ENCODE measurements at regions of chr18 and their contacts with region 1.

Region 1: DNA sequence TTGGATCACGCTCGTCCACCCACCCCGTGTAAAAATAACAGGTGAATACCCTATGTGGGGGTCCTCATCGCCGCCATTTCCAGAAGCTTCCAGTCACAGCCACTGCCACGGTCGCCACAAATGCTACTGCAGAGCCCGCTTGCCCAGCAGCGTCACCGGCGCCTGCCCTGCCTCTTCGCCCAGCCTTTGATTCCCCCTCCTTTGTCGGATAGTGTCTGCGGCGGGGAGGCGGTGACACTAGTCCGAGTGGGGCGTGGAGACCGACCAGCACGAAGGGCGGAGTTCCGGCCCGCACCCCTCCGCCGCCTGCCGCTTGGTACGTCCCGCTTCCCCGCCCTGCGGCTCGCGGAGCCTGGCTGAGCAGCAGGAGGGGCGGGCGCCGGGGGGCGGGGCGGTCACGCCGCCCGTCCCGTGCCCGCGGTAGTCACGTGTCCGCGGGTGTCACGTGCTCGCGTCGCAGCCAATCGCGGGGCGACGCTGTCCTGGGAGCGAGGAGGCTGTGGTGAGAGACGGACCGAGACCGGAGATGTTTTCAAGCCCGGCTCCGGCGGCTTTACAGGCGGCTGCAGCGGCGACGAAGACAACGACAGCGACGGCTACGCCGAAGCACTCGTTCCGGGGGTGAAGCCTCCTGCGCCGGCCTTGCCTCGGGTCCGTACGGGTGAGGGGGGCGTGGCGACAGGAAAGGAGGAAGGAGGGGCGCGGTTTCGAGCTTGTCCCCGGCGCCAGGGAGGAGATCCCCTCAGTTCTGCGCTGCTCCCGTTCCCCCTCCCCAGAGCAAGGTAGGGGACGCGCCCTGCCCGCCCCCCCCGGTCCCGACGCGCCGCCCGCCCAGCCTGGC is at the start of gene ANKRD12:
- DNase-seq: peak; percentile 98 to 99 (median 99)
- H3K4me3 ChIP-seq: peak within 1 kb of the TSS; percentile 83 to 98 (median 93)
- H3K27ac ChIP-seq: peak within 1 kb of the TSS; percentile 90 to 96
- H3K4me1 ChIP-seq: peaks cover 28 to 49% (median 39%) of the 10 kb centered on the region in 4 experiments
- H3K27me3 ChIP-seq: no peaks in the 10 kb centered on the region

Region 2: DNA sequence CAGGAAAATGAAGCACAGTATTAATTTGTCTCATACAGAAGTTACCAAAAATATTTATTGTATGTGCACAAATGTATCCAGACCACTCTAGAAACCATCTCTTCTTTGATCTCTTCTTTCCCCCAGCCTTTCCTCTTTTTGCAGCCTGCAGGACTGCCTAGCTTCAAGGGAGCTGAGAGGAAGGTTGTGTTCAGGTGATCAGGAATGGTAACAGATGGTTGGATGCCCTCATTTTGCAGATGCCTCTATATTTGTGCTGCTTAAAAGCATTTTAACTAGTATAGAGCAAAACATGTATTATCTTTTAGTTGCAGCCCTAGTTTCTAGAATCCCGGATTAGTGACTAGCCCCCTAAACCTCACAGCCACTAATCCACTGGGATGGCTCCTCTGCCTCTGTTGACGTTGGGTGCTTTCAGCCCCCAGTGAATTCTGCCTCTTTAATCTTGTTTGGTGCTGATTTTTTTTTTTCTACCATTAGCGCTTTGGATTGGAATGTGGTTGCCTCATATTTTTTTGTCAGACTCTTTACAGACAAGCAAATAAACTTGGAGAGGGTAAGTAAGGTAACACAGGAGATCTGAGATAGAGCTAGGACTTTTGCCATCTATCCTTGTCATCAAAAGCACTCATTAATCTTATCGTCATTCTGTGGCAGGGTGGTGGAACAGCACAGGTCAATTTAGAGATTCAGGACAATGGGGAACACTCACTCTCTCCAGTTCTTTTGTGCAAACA is 137.9 kb before region 1 on chr18:
- CTCF ChIA-PET with region 1: no interaction called
- POLR2A ChIA-PET with region 1: no interaction called
- DNase-seq: no peak
- H3K4me3 ChIP-seq: no peak overlapping the region
- H3K27ac ChIP-seq: peak overlapping the region in 1 of 2 experiments; percentile 36
- H3K4me1 ChIP-seq: no peaks in the 10 kb centered on the region
- H3K27me3 ChIP-seq: peaks cover 0 to 3% (median 0%) of the 10 kb centered on the region in 5 experiments

Region 3: DNA sequence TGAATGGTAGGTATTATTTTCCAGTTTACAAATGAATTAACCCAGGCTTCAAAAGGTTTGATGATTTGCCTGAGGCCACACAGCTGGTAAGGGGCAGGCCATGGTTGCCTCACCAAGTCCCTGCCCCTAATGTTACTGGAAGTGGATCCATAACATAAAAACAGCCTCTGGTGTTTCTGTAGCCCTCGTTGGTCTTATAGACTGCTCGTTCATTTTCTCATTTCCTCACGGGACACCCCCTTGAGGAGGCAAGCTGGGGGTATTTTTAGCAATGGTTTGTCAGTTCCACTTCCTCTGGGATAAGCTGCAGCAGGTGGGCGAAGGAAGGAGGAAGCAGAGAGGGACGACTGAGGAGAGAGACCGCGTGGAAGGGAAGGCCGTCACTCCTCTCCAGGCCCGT is 66.9 kb before region 1 on chr18:
- CTCF ChIA-PET with region 1: interaction called, 13 read pairs
- POLR2A ChIA-PET with region 1: interaction called, 3 read pairs
- DNase-seq: no peak
- H3K4me3 ChIP-seq: peak overlapping the region in 3 of 7 experiments; percentile 8 to 54 (median 36)
- H3K27ac ChIP-seq: peak overlapping the region in 1 of 2 experiments; percentile 39
- H3K4me1 ChIP-seq: peaks cover 9 to 31% (median 15%) of the 10 kb centered on the region in 4 experiments
- H3K27me3 ChIP-seq: no peaks in the 10 kb centered on the region

Region 4: GRCh38 chr18:9102508-9103375 is 33.8 kb before region 1 on chr18 and contains the start of gene NDUFV2:
- CTCF ChIA-PET with region 1: interaction called, 5 read pairs
- POLR2A ChIA-PET with region 1: interaction called, 23 read pairs
- DNase-seq: peak; percentile 96 to 98 (median 98)
- H3K4me3 ChIP-seq: peak within 1 kb of the TSS; percentile 80 to 97 (median 89)
- H3K27ac ChIP-seq: peak within 1 kb of the TSS; percentile 91 to 97
- H3K4me1 ChIP-seq: peaks cover 36 to 61% (median 54%) of the 10 kb centered on the region in 4 experiments
- H3K27me3 ChIP-seq: no peaks in the 10 kb centered on the region

Region 5: GRCh38 chr18:9117980-9118841 is 18.3 kb before region 1 on chr18:
- CTCF ChIA-PET with region 1: interaction called, 14 read pairs
- POLR2A ChIA-PET with region 1: interaction called, 5 read pairs
- DNase-seq: peak; percentile 67 to 92 (median 82)
- H3K4me3 ChIP-seq: peak overlapping the region in 3 of 7 experiments; percentile 44 to 63 (median 57)
- H3K27ac ChIP-seq: peak overlapping the region; percentile 37 to 80
- H3K4me1 ChIP-seq: peaks cover 29 to 65% (median 33%) of the 10 kb centered on the region in 4 experiments
- H3K27me3 ChIP-seq: no peaks in the 10 kb centered on the region

Region 6: DNA sequence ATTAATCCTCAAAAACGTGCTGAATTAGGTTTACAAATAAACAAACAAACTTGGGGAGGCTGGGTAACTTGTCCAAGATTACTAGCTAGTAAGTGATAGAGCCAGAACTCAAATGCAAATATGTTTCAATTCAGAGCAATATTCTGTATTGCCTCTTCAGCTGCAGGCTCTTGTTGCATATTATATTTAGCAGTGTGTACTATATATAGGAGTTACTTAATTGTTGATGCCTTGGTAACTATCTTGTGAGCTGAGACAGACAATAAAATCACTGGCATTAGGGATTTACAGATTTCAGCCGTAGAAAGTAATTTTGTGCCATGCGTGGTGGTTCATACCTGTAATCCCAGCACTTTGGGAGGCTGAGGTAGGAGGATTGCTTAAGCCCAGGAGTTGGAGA is 10.2 kb before region 1 on chr18:
- CTCF ChIA-PET with region 1: interaction called, 13 read pairs
- POLR2A ChIA-PET with region 1: interaction called, 5 read pairs
- DNase-seq: no peak
- H3K4me3 ChIP-seq: no peak overlapping the region
- H3K27ac ChIP-seq: peak overlapping the region in 1 of 2 experiments; percentile 15
- H3K4me1 ChIP-seq: no peaks in the 10 kb centered on the region
- H3K27me3 ChIP-seq: no peaks in the 10 kb centered on the region

Region 7: GRCh38 chr18:9147440-9148202 is 11.1 kb after region 1 on chr18:
- CTCF ChIA-PET with region 1: interaction called, 14 read pairs
- POLR2A ChIA-PET with region 1: interaction called, 3 read pairs
- DNase-seq: peak; percentile 71 to 76 (median 75)
- H3K4me3 ChIP-seq: peak overlapping the region in 3 of 7 experiments; percentile 31 to 42 (median 36)
- H3K27ac ChIP-seq: peak overlapping the region; percentile 7 to 68
- H3K4me1 ChIP-seq: peaks cover 20 to 76% (median 46%) of the 10 kb centered on the region in 4 experiments
- H3K27me3 ChIP-seq: no peaks in the 10 kb centered on the region

Region 8: DNA sequence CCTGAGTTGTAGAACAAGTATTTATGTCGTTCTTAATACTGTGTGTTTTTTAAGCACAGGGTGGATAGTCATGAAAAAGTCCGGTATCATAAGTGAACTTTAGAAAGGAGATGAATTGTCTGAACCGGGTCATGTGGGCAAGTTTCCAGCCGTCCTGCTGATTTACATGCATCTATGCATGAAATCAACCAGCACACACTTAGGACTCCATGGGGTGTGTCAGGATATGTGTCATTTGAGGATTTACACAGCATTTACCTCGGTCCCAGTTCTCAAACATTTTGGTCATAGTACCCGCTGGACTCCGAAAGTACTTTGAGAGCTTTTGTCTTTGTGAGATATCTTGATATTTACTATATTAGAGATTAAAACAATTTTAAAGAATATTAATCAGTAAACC is 150.5 kb after region 1 on chr18:
- CTCF ChIA-PET with region 1: no interaction called
- POLR2A ChIA-PET with region 1: no interaction called
- DNase-seq: no peak
- H3K4me3 ChIP-seq: no peak overlapping the region
- H3K27ac ChIP-seq: no peak overlapping the region
- H3K4me1 ChIP-seq: no peaks in the 10 kb centered on the region
- H3K27me3 ChIP-seq: no peaks in the 10 kb centered on the region

Measured in common myeloid progenitor, CD34-positive (primary cell).